Psoas muscle (tissue), 8 donors: ENCODE measurements at regions of chr5 and their contacts with region 1.

Region 1: GRCh38 chr5:42423285-42424165 is at the start of gene GHR:
- DNase-seq: peak; percentile 81 to 91
- ATAC-seq: peak; percentile 89 to 92 (median 90)
- H3K4me3 ChIP-seq: peak within 1 kb of the TSS; percentile 86
- H3K27ac ChIP-seq: peak within 1 kb of the TSS; percentile 89
- H3K4me1 ChIP-seq: peaks cover 41% of the 10 kb centered on the region
- H3K27me3 ChIP-seq: no peaks in the 10 kb centered on the region
- CTCF ChIP-seq: peak; percentile 88
- total RNA-seq, gene GHR: 31.4 to 60.3 (median 34.3) TPM

Region 2: DNA sequence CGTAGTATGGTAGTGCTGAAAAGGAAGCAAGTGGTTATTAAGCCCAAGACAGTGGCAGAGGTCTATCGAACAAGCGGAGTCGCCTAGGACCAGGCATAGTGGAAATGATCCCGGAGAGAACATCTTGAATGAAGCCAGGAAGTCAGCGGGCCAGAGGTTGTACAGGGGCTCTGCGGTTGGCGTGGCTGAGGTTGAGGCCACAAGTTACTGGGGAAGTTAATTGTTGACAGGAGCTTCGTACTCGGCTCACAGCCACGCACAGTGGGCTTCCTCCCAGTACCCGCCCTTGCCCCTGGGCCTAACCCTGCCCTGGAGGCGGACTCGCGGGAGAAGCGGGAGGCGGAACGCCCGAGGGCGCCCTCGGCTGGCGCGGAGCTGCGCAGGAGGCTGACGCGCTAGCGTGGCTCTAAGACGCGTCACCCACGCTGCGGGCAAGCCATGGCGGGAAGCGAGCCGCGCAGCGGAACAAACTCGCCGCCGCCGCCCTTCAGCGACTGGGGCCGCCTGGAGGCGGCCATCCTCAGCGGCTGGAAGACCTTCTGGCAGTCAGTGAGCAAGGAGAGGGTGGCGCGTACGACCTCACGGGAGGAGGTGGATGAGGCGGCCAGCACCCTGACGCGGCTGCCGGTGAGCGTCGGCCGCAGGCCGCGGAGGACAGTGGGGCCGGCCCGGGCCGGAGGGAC is 498.5 kb before region 1 on chr5 and contains the start of gene FBXO4:
- intact Hi-C with region 1: loop called in 1 of 2 experiments (anchors 10 kb)
- DNase-seq: peak; percentile 89 to 94
- ATAC-seq: peak; percentile 97 to 99 (median 99)
- H3K4me3 ChIP-seq: peak within 1 kb of the TSS; percentile 80
- H3K27ac ChIP-seq: peak within 1 kb of the TSS; percentile 93
- H3K4me1 ChIP-seq: peaks cover 16% of the 10 kb centered on the region
- H3K27me3 ChIP-seq: no peaks in the 10 kb centered on the region
- CTCF ChIP-seq: peak; percentile 59
- total RNA-seq, gene FBXO4: 2.6 to 4.3 (median 3.1) TPM

Region 3: GRCh38 chr5:42461507-42461906 is 38.0 kb after region 1 on chr5:
- intact Hi-C with region 1: no loop called
- DNase-seq: no peak
- ATAC-seq: peak in 1 of 4 donors; percentile 55
- H3K4me3 ChIP-seq: no peak overlapping the region
- H3K27ac ChIP-seq: no peak overlapping the region
- H3K4me1 ChIP-seq: peaks cover 10% of the 10 kb centered on the region
- H3K27me3 ChIP-seq: no peaks in the 10 kb centered on the region
- CTCF ChIP-seq: no peak

Region 4: GRCh38 chr5:42514754-42515153 is 91.2 kb after region 1 on chr5:
- intact Hi-C with region 1: loop called (anchors 1 to 10 kb)
- DNase-seq: no peak
- ATAC-seq: peak; percentile 66 to 78 (median 74)
- H3K4me3 ChIP-seq: no peak overlapping the region
- H3K27ac ChIP-seq: peak overlapping the region; percentile 88
- H3K4me1 ChIP-seq: peaks cover 61% of the 10 kb centered on the region
- H3K27me3 ChIP-seq: no peaks in the 10 kb centered on the region
- CTCF ChIP-seq: peak; percentile 46

Region 5: GRCh38 chr5:42656651-42657015 is 233.1 kb after region 1 on chr5:
- intact Hi-C with region 1: loop called in 1 of 2 experiments (anchors 5 kb)
- DNase-seq: no peak
- ATAC-seq: peak in 3 of 4 donors; percentile 25 to 64 (median 62)
- H3K4me3 ChIP-seq: peak overlapping the region; percentile 1
- H3K27ac ChIP-seq: no peak overlapping the region
- H3K4me1 ChIP-seq: peaks cover 44% of the 10 kb centered on the region
- H3K27me3 ChIP-seq: no peaks in the 10 kb centered on the region
- CTCF ChIP-seq: no peak

Region 6: DNA sequence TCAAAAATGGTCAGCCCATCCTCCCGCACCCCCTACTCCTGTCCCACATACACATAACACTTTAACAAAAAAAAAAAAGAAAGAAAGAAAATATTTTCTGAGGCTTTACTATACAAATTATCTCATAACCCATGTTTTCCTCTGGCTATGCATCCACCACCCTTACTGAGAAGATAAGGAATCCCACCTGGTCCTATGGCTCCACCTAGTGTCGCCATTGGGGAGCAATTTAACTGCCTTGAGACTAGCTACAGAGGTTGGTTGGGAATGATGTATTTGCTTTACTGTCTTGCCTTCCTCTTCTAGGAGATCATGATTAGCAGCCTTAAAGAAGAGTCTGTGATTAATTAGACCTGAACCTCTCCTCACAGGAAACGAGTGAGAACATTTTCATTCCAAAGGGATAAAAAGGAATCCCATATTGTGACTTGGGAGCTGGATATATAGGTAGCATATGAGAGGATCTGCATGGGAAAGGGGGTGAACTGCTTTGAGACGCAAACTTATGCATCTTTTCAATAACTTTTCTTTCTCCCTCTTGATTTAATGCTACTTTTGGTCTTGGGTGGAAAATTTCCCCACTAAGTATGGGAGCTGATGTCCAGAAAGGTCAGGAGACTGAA is 465.9 kb after region 1 on chr5:
- intact Hi-C with region 1: loop called in 1 of 2 experiments (anchors 5 kb)
- DNase-seq: peak; percentile 68 to 77
- ATAC-seq: peak; percentile 86 to 99 (median 94)
- H3K4me3 ChIP-seq: no peak overlapping the region
- H3K27ac ChIP-seq: no peak overlapping the region
- H3K4me1 ChIP-seq: no peaks in the 10 kb centered on the region
- H3K27me3 ChIP-seq: no peaks in the 10 kb centered on the region
- CTCF ChIP-seq: peak; percentile 92